GM12878 (cell line): ENCODE measurements at regions of chr5 and their contacts with region 1.

Region 1: GRCh38 chr5:139560752-139561654 is at the start of gene UBE2D2:
- DNase-seq: peak; percentile 92
- ATAC-seq: peak; percentile 87
- H3K4me3 ChIP-seq: peak within 1 kb of the TSS; percentile 75
- H3K27ac ChIP-seq: peak within 1 kb of the TSS; percentile 69
- H3K4me1 ChIP-seq: peaks cover 20% of the 10 kb centered on the region
- H3K27me3 ChIP-seq: no peaks in the 10 kb centered on the region
- CTCF ChIP-seq: no peak
- EP300 ChIP-seq: no peak
- POLR2A ChIP-seq: peak; percentile 87
- RAD21 ChIP-seq: no peak
- polyA plus RNA-seq, gene UBE2D2: 58.6 to 120 TPM

Region 2: GRCh38 chr5:139246394-139246793 is 314.6 kb before region 1 on chr5:
- CTCF ChIA-PET with region 1: no interaction called
- POLR2A ChIA-PET with region 1: no interaction called
- RAD21 ChIA-PET with region 1: no interaction called
- SMC1A ChIA-PET with region 1: no interaction called
- in situ Hi-C with region 1: no loop called
- intact Hi-C with region 1: no loop called
- DNase-seq: no peak
- ATAC-seq: peak; percentile 67
- H3K4me3 ChIP-seq: no peak overlapping the region
- H3K27ac ChIP-seq: no peak overlapping the region
- H3K4me1 ChIP-seq: peaks cover 12% of the 10 kb centered on the region
- H3K27me3 ChIP-seq: no peaks in the 10 kb centered on the region
- CTCF ChIP-seq: no peak
- EP300 ChIP-seq: no peak
- POLR2A ChIP-seq: no peak
- RAD21 ChIP-seq: no peak

Region 3: DNA sequence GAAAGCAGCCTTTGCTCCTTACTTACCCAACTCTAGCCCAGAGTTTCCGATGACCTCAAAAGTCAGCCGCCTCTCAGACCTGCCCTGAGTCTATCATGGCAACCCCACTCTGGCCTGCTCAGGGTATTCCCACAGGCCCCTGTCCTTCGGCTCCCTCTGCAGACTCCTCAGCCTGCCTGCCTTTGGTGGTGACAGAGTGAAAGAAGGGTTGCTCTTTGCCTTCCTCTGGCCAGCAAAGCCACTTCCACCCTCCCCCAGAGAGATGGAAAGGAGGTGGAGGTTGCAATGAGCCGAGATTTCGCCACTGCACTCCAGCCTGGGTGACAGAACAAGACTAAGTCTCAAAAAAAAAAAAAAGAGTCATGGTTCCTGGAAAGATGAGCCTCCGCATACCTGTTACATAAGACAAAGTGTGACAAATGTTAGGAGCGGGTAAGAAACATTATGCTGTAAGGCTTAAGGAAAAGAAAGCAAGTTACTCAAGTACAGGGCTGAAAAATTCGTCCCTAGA is 92.5 kb before region 1 on chr5:
- CTCF ChIA-PET with region 1: no interaction called
- POLR2A ChIA-PET with region 1: no interaction called
- RAD21 ChIA-PET with region 1: no interaction called
- SMC1A ChIA-PET with region 1: no interaction called
- in situ Hi-C with region 1: no loop called
- intact Hi-C with region 1: no loop called
- DNase-seq: no peak
- ATAC-seq: peak; percentile 53
- H3K4me3 ChIP-seq: no peak overlapping the region
- H3K27ac ChIP-seq: no peak overlapping the region
- H3K4me1 ChIP-seq: peaks cover 5% of the 10 kb centered on the region; the same call in 1 of the 2 replicates
- H3K27me3 ChIP-seq: no peaks in the 10 kb centered on the region
- CTCF ChIP-seq: peak in 1 of 3 experiments; percentile 10; a peak in 1 of 6 replicates
- EP300 ChIP-seq: no peak
- POLR2A ChIP-seq: no peak
- RAD21 ChIP-seq: no peak

Region 4: GRCh38 chr5:139495638-139496435 is 65.2 kb before region 1 on chr5:
- CTCF ChIA-PET with region 1: no interaction called
- POLR2A ChIA-PET with region 1: no interaction called
- RAD21 ChIA-PET with region 1: no interaction called
- SMC1A ChIA-PET with region 1: no interaction called
- in situ Hi-C with region 1: no loop called
- intact Hi-C with region 1: no loop called
- DNase-seq: no peak
- ATAC-seq: peak; percentile 62
- H3K4me3 ChIP-seq: no peak overlapping the region
- H3K27ac ChIP-seq: no peak overlapping the region
- H3K4me1 ChIP-seq: no peaks in the 10 kb centered on the region
- H3K27me3 ChIP-seq: no peaks in the 10 kb centered on the region
- CTCF ChIP-seq: no peak
- EP300 ChIP-seq: no peak
- POLR2A ChIP-seq: no peak
- RAD21 ChIP-seq: no peak

Region 5: DNA sequence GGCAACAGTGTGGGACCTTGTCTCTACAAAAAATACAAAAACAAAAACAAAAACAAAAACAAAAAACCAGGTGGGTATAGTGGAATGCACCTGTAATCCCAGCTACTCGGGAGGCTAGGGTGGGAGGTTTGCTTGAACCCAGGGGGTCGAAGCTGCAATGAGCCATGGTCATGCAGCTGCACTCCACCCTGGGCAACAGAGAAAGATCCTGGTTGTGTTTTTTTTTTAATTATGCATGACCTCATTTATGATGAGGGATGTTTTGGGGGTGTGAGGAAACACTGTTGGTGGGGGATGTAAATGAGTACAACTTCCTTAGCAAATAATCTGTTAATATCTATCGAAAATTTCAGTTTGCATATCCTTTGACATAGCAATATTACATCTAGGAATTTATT is 29.2 kb before region 1 on chr5:
- CTCF ChIA-PET with region 1: interaction called, 13 read pairs
- POLR2A ChIA-PET with region 1: interaction called, 43 read pairs
- RAD21 ChIA-PET with region 1: interaction called, 49 read pairs
- SMC1A ChIA-PET with region 1: interaction called, 31 read pairs
- in situ Hi-C with region 1: no loop called
- intact Hi-C with region 1: loop called (anchors 2 kb)
- DNase-seq: no peak
- ATAC-seq: peak; percentile 55
- H3K4me3 ChIP-seq: no peak overlapping the region; the same call in 1 of the 2 replicates
- H3K27ac ChIP-seq: no peak overlapping the region
- H3K4me1 ChIP-seq: peaks cover 3% of the 10 kb centered on the region; the same call in 1 of the 2 replicates
- H3K27me3 ChIP-seq: no peaks in the 10 kb centered on the region
- CTCF ChIP-seq: no peak
- EP300 ChIP-seq: no peak
- POLR2A ChIP-seq: no peak
- RAD21 ChIP-seq: no peak

Region 6: GRCh38 chr5:139574641-139575312 is 13.8 kb after region 1 on chr5:
- CTCF ChIA-PET with region 1: interaction called, 53 read pairs
- POLR2A ChIA-PET with region 1: interaction called, 26 read pairs
- RAD21 ChIA-PET with region 1: interaction called, 28 read pairs
- SMC1A ChIA-PET with region 1: interaction called, 65 read pairs
- in situ Hi-C with region 1: no loop called
- intact Hi-C with region 1: no loop called
- DNase-seq: no peak
- ATAC-seq: peak; percentile 78
- H3K4me3 ChIP-seq: no peak overlapping the region
- H3K27ac ChIP-seq: no peak overlapping the region
- H3K4me1 ChIP-seq: peaks cover 40% of the 10 kb centered on the region
- H3K27me3 ChIP-seq: no peaks in the 10 kb centered on the region
- CTCF ChIP-seq: peak; percentile 65 to 78 (median 70)
- EP300 ChIP-seq: no peak
- POLR2A ChIP-seq: no peak
- RAD21 ChIP-seq: peak; percentile 75

Region 7: GRCh38 chr5:139605887-139606286 is 44.9 kb after region 1 on chr5:
- CTCF ChIA-PET with region 1: interaction called, 7 read pairs
- POLR2A ChIA-PET with region 1: interaction called, 5 read pairs
- RAD21 ChIA-PET with region 1: interaction called, 12 read pairs
- SMC1A ChIA-PET with region 1: interaction called, 6 read pairs
- in situ Hi-C with region 1: no loop called
- intact Hi-C with region 1: loop called (anchors 5 kb)
- DNase-seq: peak; percentile 28
- ATAC-seq: peak; percentile 80
- H3K4me3 ChIP-seq: no peak overlapping the region
- H3K27ac ChIP-seq: peak overlapping the region; percentile 31; the same call in 1 of the 2 replicates
- H3K4me1 ChIP-seq: peaks cover 10% of the 10 kb centered on the region; the same call in 1 of the 2 replicates
- H3K27me3 ChIP-seq: no peaks in the 10 kb centered on the region
- CTCF ChIP-seq: no peak
- EP300 ChIP-seq: no peak
- POLR2A ChIP-seq: no peak
- RAD21 ChIP-seq: no peak

Region 8: DNA sequence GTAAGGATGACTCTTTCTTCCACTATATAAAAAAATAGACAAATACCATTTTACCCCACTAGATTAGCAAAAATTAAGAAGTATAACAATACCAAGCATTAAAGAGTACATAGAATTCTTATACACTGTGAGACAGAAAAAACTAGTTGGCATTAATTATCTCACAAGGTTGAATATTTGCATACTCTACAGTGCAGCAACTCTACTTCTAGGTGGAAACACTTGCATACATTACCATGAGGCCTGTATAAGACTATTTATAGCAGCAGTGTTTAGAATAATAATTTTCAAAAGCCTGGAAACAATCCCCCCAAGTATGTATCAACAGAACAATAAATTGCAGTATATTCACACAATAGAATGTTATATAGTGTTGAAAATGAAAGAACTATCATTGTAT is 533.9 kb after region 1 on chr5:
- CTCF ChIA-PET with region 1: no interaction called
- POLR2A ChIA-PET with region 1: no interaction called
- RAD21 ChIA-PET with region 1: no interaction called
- SMC1A ChIA-PET with region 1: no interaction called
- in situ Hi-C with region 1: no loop called
- intact Hi-C with region 1: no loop called
- DNase-seq: no peak
- ATAC-seq: peak; percentile 60
- H3K4me3 ChIP-seq: no peak overlapping the region
- H3K27ac ChIP-seq: no peak overlapping the region
- H3K4me1 ChIP-seq: no peaks in the 10 kb centered on the region
- H3K27me3 ChIP-seq: no peaks in the 10 kb centered on the region
- CTCF ChIP-seq: no peak
- EP300 ChIP-seq: no peak
- POLR2A ChIP-seq: no peak
- RAD21 ChIP-seq: no peak